Posterior vena cava (tissue), 2 donors: ENCODE measurements at regions of chr2 and their contacts with region 1.

Region 1: DNA sequence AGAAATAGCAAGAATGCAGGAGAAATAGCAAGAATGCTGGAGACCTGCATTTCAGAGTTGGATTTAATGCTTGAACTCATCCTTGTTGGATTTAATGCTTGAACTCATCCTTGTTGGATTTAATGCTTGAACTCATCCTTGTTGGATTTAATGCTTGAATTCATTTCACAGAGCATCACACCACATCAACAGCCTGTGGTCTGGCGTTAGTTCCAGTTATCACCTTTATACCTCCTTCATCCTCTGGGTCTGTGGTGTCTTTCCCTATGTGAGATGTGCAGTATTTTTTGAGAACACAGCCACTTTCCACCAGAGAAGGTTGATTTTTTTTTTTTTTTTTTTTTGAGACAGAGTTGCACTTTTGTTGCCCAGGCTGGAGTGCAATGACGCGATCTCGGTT is 546.4 kb upstream of the SOX11 start:
- DNase-seq: no peak

Region 2: DNA sequence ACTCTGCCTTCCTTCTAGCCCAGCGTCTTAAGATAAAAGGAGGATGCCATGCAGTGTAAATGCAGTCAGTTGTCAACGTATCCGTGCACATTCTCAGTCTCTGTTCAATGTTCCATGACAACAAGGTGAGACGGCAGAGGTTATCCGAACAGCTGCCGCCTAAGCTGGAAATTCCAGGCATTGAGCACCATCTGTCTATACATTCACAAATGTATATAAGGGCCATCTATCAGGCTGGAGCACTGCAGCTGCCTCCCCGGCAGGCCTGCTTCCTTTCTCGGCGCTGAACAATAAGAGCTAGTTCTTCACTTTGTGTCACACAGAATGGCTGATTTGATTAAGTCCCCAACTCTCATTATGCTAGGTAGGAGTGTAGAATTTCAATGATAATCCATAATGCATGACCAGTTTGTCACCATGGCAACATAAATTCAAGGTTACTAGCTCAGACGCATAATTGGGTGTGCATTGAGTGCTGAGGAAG is 264.1 kb after region 1 on chr2:
- intact Hi-C with region 1: loop called in 1 of 2 experiments (anchors 5 kb)
- DNase-seq: no peak

Region 3: GRCh38 chr2:6506361-6506794 is 1360.6 kb after region 1 on chr2:
- intact Hi-C with region 1: no loop called
- DNase-seq: no peak